ENCODE measurements at regions of chr6 and their contacts with region 1.

Region 1: GRCh38 chr6:97053643-97054411 is 129.3 kb downstream of the KLHL32 start:
- H3K4me3 Mint-ChIP-seq: no peak overlapping the region
- H3K27ac Mint-ChIP-seq: no peak overlapping the region
- H3K4me1 Mint-ChIP-seq: peaks cover 14% of the 10 kb centered on the region
- H3K27me3 Mint-ChIP-seq: no peaks in the 10 kb centered on the region

Region 2: GRCh38 chr6:96626759-96627364 is 427.0 kb before region 1 on chr6:
- intact Hi-C with region 1: loop called (anchors 5 kb)
- H3K4me3 Mint-ChIP-seq: no peak overlapping the region
- H3K27ac Mint-ChIP-seq: no peak overlapping the region
- H3K4me1 Mint-ChIP-seq: peaks cover 5% of the 10 kb centered on the region
- H3K27me3 Mint-ChIP-seq: no peaks in the 10 kb centered on the region

Measured in dendritic cell treated with granulocyte-macrophage colony-stimulating factor and Interleukin-4, amounts not matched to agents 40 ng/mL and 50 ng/mL, for 4 days (primary cell).